ENCODE measurements at regions of chr14 and their contacts with region 1.

Region 1: DNA sequence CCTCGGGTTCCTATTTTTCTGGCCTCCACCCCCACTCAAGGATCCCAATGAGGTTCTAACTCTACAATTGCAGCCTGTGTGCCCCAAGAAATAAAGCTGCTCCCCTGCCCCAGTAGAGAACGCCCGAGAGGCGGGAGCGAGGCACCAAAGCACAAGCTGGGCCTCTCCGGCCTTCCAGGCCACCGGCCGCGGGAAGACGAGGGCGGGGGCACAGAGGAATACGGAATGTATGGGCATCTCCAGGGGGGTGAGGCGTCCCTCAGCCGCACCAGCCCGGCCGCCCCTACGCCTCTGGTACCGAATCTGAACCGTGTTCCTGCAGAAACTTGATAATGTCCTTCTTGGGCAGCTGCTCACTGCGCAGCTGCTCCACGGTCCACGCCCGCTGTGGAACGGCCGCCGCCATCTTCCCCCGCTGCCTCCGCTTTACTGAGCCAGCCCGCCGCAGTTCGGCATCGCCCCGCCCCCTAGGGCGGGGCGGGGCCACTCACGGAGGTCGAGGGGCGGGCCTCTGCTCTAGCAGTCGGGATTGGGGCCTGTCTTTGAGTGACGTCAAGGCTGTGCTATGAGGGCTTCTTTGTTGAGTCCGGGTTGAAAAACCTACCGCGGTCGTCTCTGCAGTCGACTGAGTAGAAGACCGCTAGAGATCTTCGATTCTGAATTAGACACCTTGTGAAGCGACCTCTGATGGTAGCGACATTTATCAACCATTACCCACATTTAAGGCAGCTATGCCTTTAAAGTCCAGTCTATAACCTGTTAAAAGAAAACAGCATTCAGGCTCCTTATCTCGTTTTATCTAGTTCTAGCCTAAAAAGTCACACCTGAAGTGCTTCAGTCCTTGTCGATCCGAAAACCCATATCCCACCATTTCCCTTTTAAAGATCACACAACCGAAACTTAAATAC is at the start of gene FKBP3:
- DNase-seq: peak; percentile 99
- ATAC-seq: peak; percentile 85
- H3K4me3 ChIP-seq: peak within 1 kb of the TSS; percentile 97
- H3K27ac ChIP-seq: peak within 1 kb of the TSS; percentile 32
- H3K4me1 ChIP-seq: peaks cover 19% of the 10 kb centered on the region
- H3K27me3 ChIP-seq: no peaks in the 10 kb centered on the region
- CTCF ChIP-seq: peak; percentile 61
- total RNA-seq, gene FKBP3: 48.0 and 53.7 TPM in 2 replicates

Region 2: GRCh38 chr14:44912041-44912869 is 222.1 kb before region 1 on chr14:
- CTCF ChIA-PET with region 1: interaction called, 9 read pairs
- POLR2A ChIA-PET with region 1: no interaction called
- intact Hi-C with region 1: loop called (anchors 1 kb)
- DNase-seq: no peak
- ATAC-seq: no peak
- H3K4me3 ChIP-seq: no peak overlapping the region
- H3K27ac ChIP-seq: no peak overlapping the region
- H3K4me1 ChIP-seq: 0 out of 2 replicates have a peak, but pooled peaks cover 4% of the 10 kb centered on the region
- H3K27me3 ChIP-seq: no peaks in the 10 kb centered on the region
- CTCF ChIP-seq: no peak

Region 3: DNA sequence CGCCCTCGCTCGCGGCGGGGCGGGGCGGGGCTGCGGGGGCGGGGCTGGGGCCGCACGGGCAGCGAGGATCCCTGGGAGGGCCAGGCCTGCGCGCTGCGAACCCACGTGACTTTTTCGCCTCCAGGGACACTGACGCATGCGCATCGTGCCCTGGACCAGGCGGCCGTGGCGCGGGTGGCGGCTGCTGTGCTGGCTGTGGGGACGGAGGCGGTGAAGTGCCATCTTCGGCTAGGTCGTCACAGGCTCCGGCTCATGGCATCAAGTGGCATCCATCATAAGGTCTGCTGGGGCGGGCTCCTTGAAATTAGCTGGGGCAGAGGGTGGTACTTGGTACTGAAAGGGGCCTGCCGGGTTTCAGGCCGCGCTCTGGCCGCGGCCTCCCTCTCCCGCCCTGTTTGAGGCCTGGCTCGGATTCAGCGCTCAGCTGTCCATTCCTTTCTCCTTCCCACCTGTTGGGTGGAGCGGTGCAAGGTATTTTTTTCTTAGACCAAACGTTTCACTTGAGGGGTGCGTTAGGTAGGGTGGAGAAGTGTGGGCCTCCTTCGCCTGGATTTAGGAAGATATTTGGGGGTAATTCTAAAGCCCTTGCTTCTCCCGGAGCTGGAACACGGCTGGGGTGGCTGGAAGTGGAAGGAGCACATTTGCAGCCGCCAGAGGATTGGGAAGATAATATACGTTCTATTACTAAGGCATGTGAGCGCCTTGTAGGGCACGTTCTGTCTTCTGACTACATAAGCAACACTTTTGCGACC is 50.2 kb before region 1 on chr14 and contains the start of gene PRPF39:
- CTCF ChIA-PET with region 1: no interaction called
- POLR2A ChIA-PET with region 1: interaction called, 4 read pairs
- intact Hi-C with region 1: loop called (anchors 1 kb)
- DNase-seq: peak; percentile 97
- ATAC-seq: peak; percentile 85
- H3K4me3 ChIP-seq: peak within 1 kb of the TSS; percentile 99
- H3K27ac ChIP-seq: peak within 1 kb of the TSS; percentile 60
- H3K4me1 ChIP-seq: peaks cover 29% of the 10 kb centered on the region; the same call in 1 of the 2 replicates
- H3K27me3 ChIP-seq: no peaks in the 10 kb centered on the region
- CTCF ChIP-seq: no peak
- total RNA-seq, gene PRPF39: 16.9 and 19.2 TPM in 2 replicates

Region 4: GRCh38 chr14:45112889-45113781 is 21.2 kb before region 1 on chr14:
- CTCF ChIA-PET with region 1: no interaction called
- POLR2A ChIA-PET with region 1: no interaction called
- intact Hi-C with region 1: loop called (anchors 2 kb)
- DNase-seq: peak; percentile 88
- ATAC-seq: peak; percentile 95
- H3K4me3 ChIP-seq: peak overlapping the region; percentile 6; the same call in 1 of the 2 replicates
- H3K27ac ChIP-seq: peak overlapping the region; percentile 49
- H3K4me1 ChIP-seq: peaks cover 24% of the 10 kb centered on the region
- H3K27me3 ChIP-seq: no peaks in the 10 kb centered on the region
- CTCF ChIP-seq: no peak

Region 5: DNA sequence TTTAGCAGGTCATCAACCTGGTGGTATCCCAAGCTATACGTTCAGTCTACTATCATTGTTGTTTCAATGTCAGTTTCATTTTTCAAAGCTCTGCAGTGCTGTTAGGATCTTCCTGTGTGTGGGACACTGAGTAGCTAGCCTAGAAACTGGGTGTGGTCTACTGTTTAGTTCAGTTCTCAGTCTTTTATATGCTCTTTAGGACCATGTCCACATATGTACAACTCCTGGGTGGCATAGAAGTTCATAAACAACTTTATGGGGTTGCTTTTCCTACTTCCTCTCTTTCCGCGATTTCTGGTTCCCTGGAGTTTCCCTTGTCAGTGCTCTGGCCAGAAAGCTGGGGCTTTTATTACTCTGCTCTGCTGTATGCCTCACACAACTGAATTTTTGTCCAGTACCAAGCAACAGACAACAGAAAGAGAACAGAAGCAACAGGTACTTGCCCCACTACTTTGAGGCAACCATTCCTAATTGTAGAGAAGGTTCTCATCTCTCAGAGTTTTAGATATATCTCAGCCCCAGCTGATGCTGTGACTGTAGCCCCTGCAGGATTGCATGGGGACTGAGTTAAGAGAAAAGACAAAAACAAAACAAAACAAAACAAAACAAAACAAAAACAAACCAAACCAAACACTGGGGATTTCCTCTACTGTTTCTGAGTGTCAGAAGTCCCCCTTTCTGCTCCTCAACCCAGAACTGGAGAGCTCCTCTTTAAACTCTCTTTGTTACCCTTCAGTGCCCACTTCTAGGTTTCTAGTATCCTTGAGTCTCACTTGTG is 88.4 kb after region 1 on chr14:
- CTCF ChIA-PET with region 1: no interaction called
- POLR2A ChIA-PET with region 1: no interaction called
- intact Hi-C with region 1: no loop called
- DNase-seq: no peak
- ATAC-seq: no peak
- H3K4me3 ChIP-seq: no peak overlapping the region
- H3K27ac ChIP-seq: no peak overlapping the region
- H3K4me1 ChIP-seq: no peaks in the 10 kb centered on the region
- H3K27me3 ChIP-seq: no peaks in the 10 kb centered on the region
- CTCF ChIP-seq: no peak

Region 6: GRCh38 chr14:45253068-45253753 is 118.9 kb after region 1 on chr14 and contains the start of gene MIS18BP1:
- CTCF ChIA-PET with region 1: no interaction called
- POLR2A ChIA-PET with region 1: interaction called, 41 read pairs
- intact Hi-C with region 1: loop called (anchors 1 kb)
- DNase-seq: peak; percentile 97
- ATAC-seq: peak; percentile 92
- H3K4me3 ChIP-seq: peak within 1 kb of the TSS; percentile 71
- H3K27ac ChIP-seq: peak within 1 kb of the TSS; percentile 84
- H3K4me1 ChIP-seq: peaks cover 23% of the 10 kb centered on the region
- H3K27me3 ChIP-seq: no peaks in the 10 kb centered on the region
- CTCF ChIP-seq: peak; percentile 82
- total RNA-seq, gene MIS18BP1: 39.3 and 42.3 TPM in 2 replicates

Measured in PC-3 (cell line).